ENCODE measurements at regions of chr17 and their contacts with region 1.

Region 1: GRCh38 chr17:48074315-48075081 is 26.3 kb downstream of the NFE2L1 start:
- DNase-seq: peak; percentile 55
- H3K4me3 ChIP-seq: no peak overlapping the region
- H3K27ac ChIP-seq: peak overlapping the region; percentile 46
- H3K4me1 ChIP-seq: peaks cover 7% of the 10 kb centered on the region
- H3K27me3 ChIP-seq: no peaks in the 10 kb centered on the region
- CTCF ChIP-seq: peak; percentile 83 to 85

Region 2: GRCh38 chr17:48047741-48048383 is 26.6 kb before region 1 on chr17 and contains the start of gene NFE2L1:
- CTCF ChIA-PET with region 1: no interaction called
- dilution Hi-C with region 1: no loop called
- in situ Hi-C with region 1: no loop called
- intact Hi-C with region 1: loop called (anchors 1 kb)
- DNase-seq: peak; percentile 100
- H3K4me3 ChIP-seq: peak within 1 kb of the TSS; percentile 55 to 87 (median 74)
- H3K27ac ChIP-seq: peak within 1 kb of the TSS; percentile 88
- H3K4me1 ChIP-seq: peaks cover 61% of the 10 kb centered on the region
- H3K27me3 ChIP-seq: no peaks in the 10 kb centered on the region
- CTCF ChIP-seq: no peak
- total RNA-seq, gene NFE2L1: 283 to 291 TPM

Region 3: DNA sequence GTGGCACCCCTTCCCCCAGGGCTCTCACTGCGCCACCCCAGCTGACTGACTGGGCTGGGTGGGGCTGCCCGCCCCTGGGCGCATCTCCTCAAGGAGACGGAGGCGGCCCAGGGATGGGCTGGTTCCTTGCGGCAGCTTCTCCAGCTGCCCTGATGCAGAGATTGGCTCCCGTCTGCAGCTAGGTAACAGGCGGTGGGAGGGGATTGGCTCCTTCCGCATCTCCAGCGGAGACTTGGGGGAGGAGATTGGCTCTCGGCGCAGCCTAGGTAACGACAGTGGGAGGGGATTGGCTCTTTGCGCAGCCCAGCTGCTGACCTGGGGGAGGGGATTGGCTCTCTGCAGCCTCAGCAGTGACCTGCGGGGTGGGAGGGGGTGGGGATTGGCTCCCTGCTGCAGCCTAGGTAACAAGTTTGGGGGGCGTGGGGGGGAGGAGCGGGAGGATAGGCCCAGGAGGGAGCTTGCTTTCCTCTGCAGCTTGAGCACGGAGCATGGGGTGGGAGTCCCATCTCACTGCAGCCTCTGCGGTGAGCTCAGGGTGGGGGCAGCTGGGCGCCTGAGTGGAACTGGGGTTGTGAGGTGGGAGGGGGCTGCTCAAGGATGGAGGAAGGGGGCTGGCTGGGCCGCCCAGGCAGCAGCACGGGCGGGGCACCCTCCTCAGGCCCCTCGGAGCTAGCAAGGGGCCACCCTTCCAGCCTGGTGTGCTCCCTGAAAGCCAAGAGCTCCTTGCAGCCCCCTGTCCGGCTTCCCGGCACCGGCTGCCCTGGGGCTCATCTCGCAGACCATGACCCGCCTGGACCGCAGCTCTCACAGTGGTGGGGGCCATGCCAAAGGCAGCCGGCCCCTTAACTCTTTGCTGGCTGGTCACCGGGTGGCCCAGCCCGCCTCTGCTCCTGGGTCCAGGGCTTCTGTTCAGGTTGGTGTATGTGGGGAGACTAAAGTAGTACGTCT is 20.0 kb before region 1 on chr17:
- CTCF ChIA-PET with region 1: no interaction called
- dilution Hi-C with region 1: no loop called
- in situ Hi-C with region 1: no loop called
- intact Hi-C with region 1: loop called (anchors 1 kb)
- DNase-seq: peak; percentile 93
- H3K4me3 ChIP-seq: peak overlapping the region; percentile 8 to 87 (median 23)
- H3K27ac ChIP-seq: peak overlapping the region; percentile 51
- H3K4me1 ChIP-seq: peaks cover 55% of the 10 kb centered on the region
- H3K27me3 ChIP-seq: no peaks in the 10 kb centered on the region
- CTCF ChIP-seq: no peak

Region 4: DNA sequence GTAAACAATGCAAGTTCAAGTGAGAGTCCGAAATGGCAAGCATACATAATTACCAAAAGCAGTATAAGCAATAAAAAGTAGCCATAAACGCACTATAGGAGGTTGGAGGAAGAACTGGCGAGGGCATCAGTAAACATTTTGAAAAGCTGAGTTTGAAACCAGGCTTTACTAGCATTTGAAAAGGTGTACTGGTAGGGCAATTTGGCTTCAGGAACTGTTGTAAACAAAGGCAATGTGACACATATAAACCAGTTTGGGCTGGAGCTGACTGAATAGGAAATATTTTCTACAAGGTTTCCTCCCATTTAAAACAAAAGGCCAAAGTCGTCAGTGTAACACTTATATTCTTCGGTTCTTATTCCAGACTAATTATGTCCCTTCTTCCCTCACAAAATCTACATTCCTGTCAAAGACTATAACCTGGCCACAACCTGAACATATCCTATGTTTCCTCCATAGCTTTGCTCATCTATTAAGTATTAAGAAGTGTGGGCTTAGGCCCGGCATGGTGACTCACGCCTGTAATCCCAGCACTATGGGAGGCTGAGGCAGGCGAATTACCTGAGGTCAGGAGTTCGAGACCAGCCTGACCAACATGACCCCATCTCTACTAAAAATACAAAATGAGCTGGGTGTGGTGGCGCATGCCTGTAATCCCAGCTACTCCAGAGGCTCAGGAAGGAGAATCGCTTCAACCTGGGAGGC is 19.0 kb after region 1 on chr17:
- CTCF ChIA-PET with region 1: no interaction called
- dilution Hi-C with region 1: no loop called
- in situ Hi-C with region 1: no loop called
- intact Hi-C with region 1: no loop called
- DNase-seq: no peak
- H3K4me3 ChIP-seq: no peak overlapping the region
- H3K27ac ChIP-seq: no peak overlapping the region
- H3K4me1 ChIP-seq: no peaks in the 10 kb centered on the region
- H3K27me3 ChIP-seq: no peaks in the 10 kb centered on the region
- CTCF ChIP-seq: no peak